Sigmoid colon (tissue), 7 donors: ENCODE measurements at regions of chr15 and their contacts with region 1.

Region 1: GRCh38 chr15:84023636-84024035 is 211.9 kb upstream of the GOLGA6L4 start:
- DNase-seq: no peak
- H3K4me3 ChIP-seq: no peak overlapping the region
- H3K27ac ChIP-seq: no peak overlapping the region
- H3K4me1 ChIP-seq: no peaks in the 10 kb centered on the region
- H3K27me3 ChIP-seq: no peaks in the 10 kb centered on the region
- CTCF ChIP-seq: peak; percentile 14 to 48 (median 42)
- EP300 ChIP-seq: no peak
- POLR2A ChIP-seq: no peak

Region 2: DNA sequence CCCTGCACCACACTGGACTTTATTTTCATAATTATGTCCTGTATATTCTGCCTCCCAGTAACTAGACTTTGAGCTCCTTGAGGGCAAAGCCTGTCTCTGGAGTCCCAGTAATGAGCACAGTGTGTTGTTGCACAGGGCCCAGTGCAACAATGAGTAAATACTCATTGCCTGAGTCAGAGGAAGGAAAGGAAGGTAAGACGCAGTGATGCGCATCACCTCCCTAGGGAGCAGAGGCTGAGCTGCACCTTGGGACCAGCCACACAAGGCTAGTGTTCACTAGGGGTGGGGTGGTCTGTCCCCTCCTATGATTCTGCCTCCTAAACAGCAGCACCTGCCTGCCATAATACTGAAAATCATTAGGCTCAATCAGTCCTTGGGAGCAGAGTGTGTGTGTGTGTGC is 456.3 kb before region 1 on chr15:
- intact Hi-C with region 1: loop called (anchors 2 kb)
- DNase-seq: no peak
- H3K4me3 ChIP-seq: no peak overlapping the region
- H3K27ac ChIP-seq: no peak overlapping the region
- H3K4me1 ChIP-seq: peaks cover 0 to 3% (median 0%) of the 10 kb centered on the region in 4 donors
- H3K27me3 ChIP-seq: no peaks in the 10 kb centered on the region
- CTCF ChIP-seq: no peak
- EP300 ChIP-seq: no peak
- POLR2A ChIP-seq: no peak